Posterior vena cava (tissue), 2 donors: ENCODE measurements at regions of chr13 and their contacts with region 1.

Region 1: DNA sequence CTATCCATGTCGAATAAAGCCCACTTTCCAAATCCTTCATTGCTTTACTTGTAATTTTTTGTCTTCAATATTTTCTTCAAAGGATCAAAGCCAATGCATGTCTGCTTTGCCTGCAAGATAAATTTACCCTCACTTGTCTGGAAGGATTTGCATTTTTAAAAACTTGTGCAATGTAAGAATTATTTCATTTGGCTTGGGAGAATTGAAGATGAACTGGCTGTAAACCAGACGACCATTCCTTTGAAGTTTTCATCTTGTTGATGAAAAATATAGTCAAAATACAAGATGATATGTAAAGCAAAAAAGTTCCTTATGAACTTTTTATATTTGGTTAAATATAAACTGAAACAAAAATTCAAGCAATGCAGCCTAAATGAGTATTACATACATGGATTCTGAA is 225.0 kb downstream of the SLITRK1 start:
- DNase-seq: no peak

Region 2: GRCh38 chr13:83622422-83622784 is 34.9 kb before region 1 on chr13:
- intact Hi-C with region 1: loop called in 1 of 2 experiments (anchors 1 kb)
- DNase-seq: no peak

Region 3: DNA sequence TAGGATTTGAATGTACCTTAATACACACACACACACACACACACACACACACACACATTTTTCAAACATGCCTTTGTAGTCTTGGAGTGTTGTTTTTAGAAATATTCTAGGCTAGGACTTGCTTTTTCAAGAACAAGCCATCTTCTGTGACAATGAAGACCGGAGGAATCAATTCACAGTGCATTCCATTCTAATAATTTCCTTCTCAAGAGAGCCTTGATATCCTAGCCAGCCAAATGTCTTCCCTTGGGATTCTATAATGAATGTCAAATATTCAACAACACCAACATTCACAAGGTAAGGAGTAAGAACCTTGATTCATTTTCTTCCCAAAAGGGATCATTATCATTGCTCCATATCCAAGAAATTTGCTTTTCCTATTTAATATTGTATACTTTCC is 44.7 kb after region 1 on chr13:
- intact Hi-C with region 1: loop called in 1 of 2 experiments (anchors 2 kb)
- DNase-seq: no peak